ENCODE measurements at regions of chr4 and their contacts with region 1.

Region 1: GRCh38 chr4:150297861-150298474 is 219.7 kb downstream of the DCLK2 start:
- DNase-seq: no peak
- H3K4me3 ChIP-seq: no peak overlapping the region
- CTCF ChIP-seq: peak; percentile 49

Region 2: DNA sequence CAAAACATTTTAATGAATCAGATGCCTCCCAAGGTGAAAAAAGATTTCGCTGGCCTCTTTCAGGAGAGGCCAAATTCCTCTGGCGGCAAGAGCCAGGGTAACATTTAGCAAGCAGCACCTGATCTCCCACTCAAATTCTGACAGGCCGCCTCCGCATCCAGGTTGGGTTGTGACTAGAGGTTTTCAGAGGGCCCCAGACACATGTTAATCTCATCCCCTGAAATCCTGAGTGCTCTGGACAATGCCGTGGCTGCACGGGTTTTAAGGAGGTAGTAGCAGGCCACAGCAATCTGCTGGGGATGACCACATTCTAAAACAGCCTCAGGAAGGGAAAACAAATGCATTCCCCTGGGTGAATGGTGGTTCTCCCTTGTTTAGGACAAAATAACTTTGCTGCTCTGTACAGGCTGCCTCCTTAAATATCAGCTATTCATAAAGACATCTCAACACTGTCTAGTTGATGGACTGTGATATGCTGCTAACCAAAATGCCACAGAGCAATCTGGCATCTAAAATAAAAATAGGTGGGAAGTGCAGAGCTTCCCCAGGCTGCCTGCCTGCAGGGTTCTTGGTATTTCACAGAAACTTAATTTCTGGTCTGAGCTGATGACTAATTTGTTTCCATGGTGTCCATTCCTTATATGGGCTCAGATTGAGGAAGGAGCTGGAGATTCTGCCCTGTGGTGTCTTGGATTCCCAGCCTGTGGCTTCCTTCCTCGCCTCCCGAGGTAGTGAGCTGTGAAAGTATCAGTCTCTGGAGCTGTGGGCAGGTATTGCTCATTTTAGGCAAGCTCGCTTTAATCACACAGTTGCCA is 17.7 kb before region 1 on chr4:
- CTCF ChIA-PET with region 1: interaction called, 30 read pairs
- POLR2A ChIA-PET with region 1: interaction called, 3 read pairs
- DNase-seq: peak; percentile 74
- H3K4me3 ChIP-seq: no peak overlapping the region
- CTCF ChIP-seq: no peak

Region 3: DNA sequence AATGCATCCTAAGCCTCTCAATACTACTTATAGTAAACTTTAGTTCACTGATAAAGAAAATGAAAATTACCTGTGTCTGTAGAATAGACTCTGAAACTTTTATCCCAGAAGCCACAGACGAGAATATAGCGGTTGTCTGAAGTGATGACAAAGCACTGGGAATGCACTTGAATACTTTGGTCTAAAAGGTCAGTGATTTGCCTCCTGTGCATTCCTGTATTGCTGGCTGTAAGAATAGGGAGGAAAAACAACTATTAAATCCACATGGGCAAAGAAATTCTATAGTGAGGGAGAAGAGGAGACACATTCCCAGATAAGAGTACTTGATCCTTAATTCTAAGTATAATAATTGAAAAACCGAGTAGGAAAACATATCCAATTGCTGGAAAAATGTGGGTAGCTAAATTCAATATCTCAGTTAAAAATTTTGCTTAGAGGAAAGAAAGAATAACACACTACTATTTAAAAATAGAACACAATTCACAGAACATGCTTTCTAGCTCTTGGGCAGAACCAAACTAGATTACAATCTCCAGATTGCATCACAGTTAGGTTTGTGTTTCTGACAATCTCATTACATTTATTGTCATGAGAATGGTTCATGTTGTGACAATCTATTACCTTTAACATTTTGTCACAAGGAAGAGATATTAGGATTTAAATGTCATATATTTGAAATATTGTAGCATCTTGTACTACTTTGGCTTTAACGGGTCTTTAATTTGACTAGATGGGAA is 12.4 kb after region 1 on chr4:
- CTCF ChIA-PET with region 1: interaction called, 14 read pairs
- POLR2A ChIA-PET with region 1: no interaction called
- DNase-seq: no peak
- H3K4me3 ChIP-seq: no peak overlapping the region
- CTCF ChIP-seq: no peak

Region 4: GRCh38 chr4:150593996-150594395 is 296.0 kb after region 1 on chr4:
- CTCF ChIA-PET with region 1: interaction called, 21 read pairs
- POLR2A ChIA-PET with region 1: no interaction called
- DNase-seq: no peak
- H3K4me3 ChIP-seq: no peak overlapping the region
- CTCF ChIP-seq: peak; percentile 18

Region 5: GRCh38 chr4:150855981-150856510 is 558.1 kb after region 1 on chr4:
- CTCF ChIA-PET with region 1: interaction called, 21 read pairs
- POLR2A ChIA-PET with region 1: no interaction called
- DNase-seq: no peak
- H3K4me3 ChIP-seq: no peak overlapping the region
- CTCF ChIP-seq: no peak